PC-9 (cell line): ENCODE measurements at regions of chr12 and their contacts with region 1.

Region 1: GRCh38 chr12:57268264-57268663 is 17.3 kb upstream of the STAC3 start:
- DNase-seq: no peak
- H3K4me3 ChIP-seq: no peak overlapping the region
- H3K27ac ChIP-seq: no peak overlapping the region
- H3K4me1 ChIP-seq: no peaks in the 10 kb centered on the region
- H3K27me3 ChIP-seq: no peaks in the 10 kb centered on the region
- CTCF ChIP-seq: no peak

Region 2: GRCh38 chr12:56839915-56840325 is 428.3 kb before region 1 on chr12:
- CTCF ChIA-PET with region 1: no interaction called
- POLR2A ChIA-PET with region 1: no interaction called
- intact Hi-C with region 1: no loop called
- DNase-seq: peak; percentile 37 to 56
- H3K4me3 ChIP-seq: no peak overlapping the region
- H3K27ac ChIP-seq: no peak overlapping the region
- H3K4me1 ChIP-seq: no peaks in the 10 kb centered on the region
- H3K27me3 ChIP-seq: no peaks in the 10 kb centered on the region
- CTCF ChIP-seq: peak; percentile 70

Region 3: DNA sequence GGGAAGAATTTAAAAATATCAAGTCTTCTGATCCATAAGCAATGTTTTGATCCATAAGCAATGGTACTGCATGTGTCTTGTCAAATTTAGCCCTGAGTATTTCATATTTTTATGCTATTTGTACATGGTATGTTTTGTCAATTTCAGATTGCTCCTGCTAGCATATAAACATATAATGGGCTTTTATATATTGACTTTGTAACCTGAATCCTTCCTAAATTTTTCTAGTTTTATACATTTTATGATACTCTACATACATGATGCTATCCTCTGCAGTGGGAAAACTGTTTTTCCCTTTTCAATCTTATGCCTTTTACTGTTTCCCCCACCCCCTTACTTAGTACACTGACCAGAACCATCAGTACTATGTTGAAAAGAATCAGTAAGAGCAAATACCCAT is 87.5 kb after region 1 on chr12:
- CTCF ChIA-PET with region 1: no interaction called
- POLR2A ChIA-PET with region 1: no interaction called
- intact Hi-C with region 1: no loop called
- DNase-seq: no peak
- H3K4me3 ChIP-seq: no peak overlapping the region
- H3K27ac ChIP-seq: no peak overlapping the region
- H3K4me1 ChIP-seq: no peaks in the 10 kb centered on the region
- H3K27me3 ChIP-seq: no peaks in the 10 kb centered on the region
- CTCF ChIP-seq: no peak

Region 4: DNA sequence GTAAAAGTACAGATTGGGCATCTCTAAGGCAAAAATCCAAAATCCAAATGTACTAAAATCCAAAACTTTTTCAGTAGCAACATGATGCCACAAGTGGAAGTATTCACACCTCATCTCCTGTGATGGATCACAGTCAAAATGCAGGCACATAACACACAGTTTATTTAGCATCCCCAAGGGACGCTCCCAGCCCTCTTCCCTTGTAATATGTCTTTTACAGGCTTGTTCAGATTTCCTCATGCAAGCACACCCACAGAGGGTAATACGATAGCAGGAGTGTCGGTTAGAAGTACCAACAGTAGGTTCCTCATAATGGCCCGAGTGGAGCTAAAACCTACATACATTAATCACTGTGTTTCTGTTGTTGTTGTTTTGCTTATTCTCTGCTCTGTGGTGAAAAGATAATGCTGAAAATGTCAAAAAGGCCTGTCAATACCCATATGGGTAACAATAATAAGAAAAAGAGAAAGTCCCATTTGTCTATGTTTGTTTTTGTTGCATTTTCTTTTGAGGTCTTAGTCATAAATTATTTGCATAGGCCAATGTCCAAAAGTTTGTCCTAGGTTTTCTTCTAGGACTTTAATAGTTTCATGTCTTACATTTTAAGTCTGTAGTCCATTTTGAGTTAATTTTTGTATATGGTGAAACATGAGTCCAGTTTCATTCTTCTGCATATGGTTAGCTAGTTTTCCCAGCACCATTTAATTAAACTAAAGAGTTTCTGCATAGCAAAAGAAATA is 1518.9 kb after region 1 on chr12:
- CTCF ChIA-PET with region 1: no interaction called
- POLR2A ChIA-PET with region 1: interaction called, 10 read pairs
- intact Hi-C with region 1: no loop called
- DNase-seq: no peak
- H3K4me3 ChIP-seq: no peak overlapping the region
- H3K27ac ChIP-seq: no peak overlapping the region
- H3K4me1 ChIP-seq: no peaks in the 10 kb centered on the region
- H3K27me3 ChIP-seq: no peaks in the 10 kb centered on the region
- CTCF ChIP-seq: no peak